ENCODE measurements at regions of chr9 and their contacts with region 1.

Region 1: GRCh38 chr9:111896353-111896958 is at the start of gene UGCG:
- DNase-seq: peak; percentile 91
- H3K4me3 ChIP-seq: peak within 1 kb of the TSS; percentile 97
- H3K27ac ChIP-seq: peak within 1 kb of the TSS; percentile 82
- H3K4me1 ChIP-seq: peaks cover 42% of the 10 kb centered on the region
- CTCF ChIP-seq: no peak
- total RNA-seq, gene UGCG: 12.0 and 14.7 TPM in 2 replicates

Region 2: DNA sequence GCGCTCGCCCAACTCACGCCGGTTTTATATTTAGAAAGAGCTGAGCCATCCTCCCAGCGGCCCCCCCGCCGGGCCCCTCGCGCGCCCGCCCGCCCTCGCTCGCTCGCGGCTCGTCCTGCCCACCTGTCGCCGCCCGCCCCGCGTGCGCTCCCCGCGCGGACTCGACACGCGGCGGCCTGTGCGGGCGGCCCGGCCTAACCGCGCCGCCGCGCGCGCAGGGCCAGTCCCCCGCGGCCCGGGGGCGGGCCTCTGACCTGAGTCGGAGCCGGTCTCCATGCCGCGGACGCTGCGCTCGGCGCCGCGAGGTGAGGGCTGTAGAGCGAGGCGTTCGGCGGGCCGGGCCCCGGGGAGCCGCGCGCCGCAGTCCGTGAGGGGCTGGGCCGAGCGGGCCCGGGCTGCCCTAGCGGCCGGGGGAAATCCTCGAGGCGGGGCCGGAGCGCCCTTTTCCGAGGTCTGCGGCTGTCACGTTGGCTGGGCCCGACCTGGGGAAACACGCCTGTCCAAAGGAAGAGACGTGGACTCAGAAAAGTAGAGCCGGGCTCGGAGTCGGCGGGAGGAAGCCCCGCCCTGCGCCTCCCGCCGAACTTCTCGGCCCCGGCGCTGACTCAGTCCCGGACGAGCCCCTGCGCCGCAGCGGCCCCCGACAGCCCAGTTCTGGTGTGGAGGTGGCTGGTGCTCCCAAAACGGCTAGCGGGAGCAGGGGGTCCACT is 412.4 kb before region 1 on chr9 and contains the start of gene ECPAS:
- CTCF ChIA-PET with region 1: interaction called, 3 read pairs
- POLR2A ChIA-PET with region 1: no interaction called
- intact Hi-C with region 1: loop called (anchors 2 kb)
- DNase-seq: peak; percentile 79
- H3K4me3 ChIP-seq: peak within 1 kb of the TSS; percentile 99
- H3K27ac ChIP-seq: peak within 1 kb of the TSS; percentile 72
- H3K4me1 ChIP-seq: peaks cover 9% of the 10 kb centered on the region
- CTCF ChIP-seq: no peak
- total RNA-seq, gene ECPAS: 41.0 and 47.3 TPM in 2 replicates

Region 3: GRCh38 chr9:111631071-111631971 is 265.1 kb before region 1 on chr9 and contains the start of gene DNAJC25:
- CTCF ChIA-PET with region 1: no interaction called
- POLR2A ChIA-PET with region 1: no interaction called
- intact Hi-C with region 1: loop called (anchors 2 kb)
- DNase-seq: peak; percentile 99
- H3K4me3 ChIP-seq: peak within 1 kb of the TSS; percentile 88
- H3K27ac ChIP-seq: peak within 1 kb of the TSS; percentile 59
- H3K4me1 ChIP-seq: peaks cover 26% of the 10 kb centered on the region
- CTCF ChIP-seq: no peak
- total RNA-seq, gene DNAJC25: 4.9 and 5.8 TPM in 2 replicates

Region 4: GRCh38 chr9:111926421-111926875 is 30.0 kb after region 1 on chr9:
- CTCF ChIA-PET with region 1: no interaction called
- POLR2A ChIA-PET with region 1: interaction called, 10 read pairs
- intact Hi-C with region 1: loop called (anchors 2 kb)
- DNase-seq: peak; percentile 91
- H3K4me3 ChIP-seq: peak overlapping the region; percentile 38
- H3K27ac ChIP-seq: peak overlapping the region; percentile 80
- H3K4me1 ChIP-seq: peaks cover 68% of the 10 kb centered on the region
- CTCF ChIP-seq: no peak; the same call in 1 of the 2 replicates

Region 5: GRCh38 chr9:111983484-111983908 is 87.0 kb after region 1 on chr9:
- CTCF ChIA-PET with region 1: no interaction called
- POLR2A ChIA-PET with region 1: interaction called, 3 read pairs
- intact Hi-C with region 1: loop called (anchors 5 kb)
- DNase-seq: peak; percentile 67
- H3K4me3 ChIP-seq: no peak overlapping the region
- H3K27ac ChIP-seq: peak overlapping the region; percentile 13
- H3K4me1 ChIP-seq: peaks cover 16% of the 10 kb centered on the region
- CTCF ChIP-seq: no peak

Region 6: DNA sequence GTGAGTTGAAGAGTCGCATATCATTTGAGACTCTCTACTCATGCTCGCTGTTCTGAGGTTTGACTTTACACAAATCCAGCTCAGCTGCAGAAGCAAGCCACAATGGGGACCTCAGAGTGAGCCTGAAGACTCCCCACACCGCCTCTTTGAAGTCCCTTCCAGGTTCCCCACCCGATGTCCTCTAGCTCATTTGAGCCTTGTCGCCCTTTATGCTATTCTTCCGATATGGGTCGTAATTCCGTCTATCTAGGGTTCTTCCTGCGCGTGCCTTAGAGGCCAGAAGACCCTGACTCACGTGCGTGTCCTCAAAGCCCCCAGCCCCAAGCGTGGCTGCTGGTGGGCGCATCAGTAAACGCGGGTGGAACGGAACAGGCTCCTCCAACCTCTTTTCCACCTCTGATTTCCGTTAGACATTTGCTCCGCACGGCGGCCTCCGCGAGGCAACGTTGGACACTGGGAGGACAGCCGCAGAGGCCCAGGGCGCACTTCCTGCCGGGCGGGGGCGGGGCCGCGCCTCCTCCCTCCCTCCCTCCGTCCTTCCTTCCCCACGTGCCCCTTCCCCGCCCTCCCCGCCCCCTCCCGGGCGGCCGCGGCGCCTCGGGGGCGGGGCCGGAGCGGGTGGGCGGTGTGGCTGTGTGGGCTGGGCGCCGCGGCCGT is 853.8 kb after region 1 on chr9 and contains the start of gene SNX30:
- CTCF ChIA-PET with region 1: no interaction called
- POLR2A ChIA-PET with region 1: no interaction called
- intact Hi-C with region 1: loop called (anchors 10 kb)
- DNase-seq: peak; percentile 86
- H3K4me3 ChIP-seq: peak within 1 kb of the TSS; percentile 99
- H3K27ac ChIP-seq: peak within 1 kb of the TSS; percentile 29
- H3K4me1 ChIP-seq: peaks cover 35% of the 10 kb centered on the region
- CTCF ChIP-seq: no peak
- total RNA-seq, gene SNX30: 14.2 and 19.8 TPM in 2 replicates

Measured in OCI-LY7 (cell line).